ENCODE measurements at regions of chr16 and their contacts with region 1.

Region 1: DNA sequence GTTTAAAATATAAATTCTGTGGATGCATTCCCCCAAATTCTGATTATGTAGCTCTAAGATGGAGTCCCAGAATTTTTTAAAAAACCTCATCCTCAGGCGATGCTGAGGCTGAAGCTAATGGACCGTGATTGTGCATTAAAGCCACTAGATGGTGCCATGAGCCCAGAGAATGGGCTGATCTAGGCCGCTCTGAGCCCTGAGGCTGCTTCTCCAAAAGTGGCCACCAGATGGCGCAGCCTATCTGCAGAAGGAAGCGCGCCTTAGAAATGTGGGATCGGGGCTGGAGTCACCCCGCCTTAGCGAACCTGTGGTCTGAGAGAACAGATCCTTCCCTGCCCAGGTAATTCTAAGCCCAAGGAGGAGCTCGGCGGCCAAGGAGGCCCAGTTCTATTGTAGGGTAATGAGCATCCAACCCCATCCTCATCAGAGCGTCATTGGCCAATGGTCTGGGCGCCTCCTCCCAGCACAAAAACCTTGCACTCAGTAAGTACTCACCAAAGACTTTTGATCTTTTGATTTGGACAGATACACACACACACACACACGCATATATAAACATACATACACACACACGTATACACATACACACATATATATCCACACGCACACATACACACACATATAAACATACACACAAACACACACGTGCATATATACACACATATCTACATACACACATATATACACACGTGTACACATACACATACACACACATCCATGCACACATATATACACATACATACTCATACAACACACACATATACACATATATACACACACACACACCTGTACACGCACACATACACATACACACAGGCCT is 13.7 kb upstream of the MMP2 start:
- DNase-seq: peak; percentile 89
- H3K4me3 Mint-ChIP-seq: no peak overlapping the region
- H3K27ac Mint-ChIP-seq: no peak overlapping the region
- H3K4me1 Mint-ChIP-seq: no peaks in the 10 kb centered on the region
- H3K27me3 Mint-ChIP-seq: peaks cover 3% of the 10 kb centered on the region

Region 2: DNA sequence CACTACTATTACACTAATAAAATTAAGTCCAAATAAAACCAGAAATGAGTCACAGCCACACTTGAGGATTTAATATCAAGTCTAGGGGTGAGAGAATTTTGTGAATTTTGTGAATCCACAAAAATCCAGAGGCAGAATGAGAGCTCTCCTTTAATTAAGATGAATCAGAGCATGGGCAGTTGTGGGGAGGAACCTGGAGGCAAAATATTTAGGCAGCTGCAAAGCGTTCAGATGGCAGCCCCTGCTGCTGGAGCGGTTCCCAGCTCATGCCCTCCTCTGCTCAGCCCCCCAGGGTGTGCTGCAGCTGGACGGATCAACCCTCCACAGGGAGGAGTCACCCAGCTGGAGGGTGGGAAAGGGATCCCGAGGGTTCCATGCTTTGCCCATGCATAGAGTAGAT is 184.7 kb before region 1 on chr16:
- CTCF ChIA-PET with region 1: no interaction called
- DNase-seq: no peak
- H3K4me3 Mint-ChIP-seq: no peak overlapping the region
- H3K27ac Mint-ChIP-seq: no peak overlapping the region
- H3K4me1 Mint-ChIP-seq: no peaks in the 10 kb centered on the region
- H3K27me3 Mint-ChIP-seq: no peaks in the 10 kb centered on the region

Region 3: GRCh38 chr16:55499951-55500529 is 34.8 kb after region 1 on chr16:
- CTCF ChIA-PET with region 1: interaction called, 16 read pairs
- DNase-seq: peak; percentile 40
- H3K4me3 Mint-ChIP-seq: no peak overlapping the region
- H3K27ac Mint-ChIP-seq: no peak overlapping the region
- H3K4me1 Mint-ChIP-seq: peaks cover 15% of the 10 kb centered on the region
- H3K27me3 Mint-ChIP-seq: peaks cover 16% of the 10 kb centered on the region

Region 4: DNA sequence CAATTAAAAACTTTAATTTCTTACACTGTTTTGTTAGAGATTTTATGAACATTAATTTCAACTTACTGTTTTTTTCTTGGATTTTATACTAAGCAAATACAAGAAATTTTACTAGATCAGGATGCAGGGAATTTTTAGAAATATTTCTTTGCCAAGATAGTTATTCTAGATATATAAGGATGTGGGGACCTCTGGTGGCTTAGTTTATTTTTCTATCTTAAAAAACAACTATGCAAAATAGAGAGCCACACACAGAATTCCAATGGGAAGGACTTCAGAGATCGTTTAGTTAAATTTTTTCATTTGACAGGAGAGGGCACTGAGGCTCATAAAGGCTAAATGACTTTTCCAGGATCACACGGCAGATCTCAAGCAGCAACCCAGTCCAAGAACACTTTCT is 78.2 kb after region 1 on chr16:
- CTCF ChIA-PET with region 1: interaction called, 20 read pairs
- DNase-seq: no peak
- H3K4me3 Mint-ChIP-seq: no peak overlapping the region
- H3K27ac Mint-ChIP-seq: no peak overlapping the region
- H3K4me1 Mint-ChIP-seq: no peaks in the 10 kb centered on the region
- H3K27me3 Mint-ChIP-seq: no peaks in the 10 kb centered on the region

Region 5: GRCh38 chr16:55701442-55702319 is 236.4 kb after region 1 on chr16:
- CTCF ChIA-PET with region 1: interaction called, 125 read pairs
- DNase-seq: peak; percentile 48
- H3K4me3 Mint-ChIP-seq: no peak overlapping the region
- H3K27ac Mint-ChIP-seq: no peak overlapping the region
- H3K4me1 Mint-ChIP-seq: peaks cover 6% of the 10 kb centered on the region
- H3K27me3 Mint-ChIP-seq: peaks cover 7% of the 10 kb centered on the region

Region 6: DNA sequence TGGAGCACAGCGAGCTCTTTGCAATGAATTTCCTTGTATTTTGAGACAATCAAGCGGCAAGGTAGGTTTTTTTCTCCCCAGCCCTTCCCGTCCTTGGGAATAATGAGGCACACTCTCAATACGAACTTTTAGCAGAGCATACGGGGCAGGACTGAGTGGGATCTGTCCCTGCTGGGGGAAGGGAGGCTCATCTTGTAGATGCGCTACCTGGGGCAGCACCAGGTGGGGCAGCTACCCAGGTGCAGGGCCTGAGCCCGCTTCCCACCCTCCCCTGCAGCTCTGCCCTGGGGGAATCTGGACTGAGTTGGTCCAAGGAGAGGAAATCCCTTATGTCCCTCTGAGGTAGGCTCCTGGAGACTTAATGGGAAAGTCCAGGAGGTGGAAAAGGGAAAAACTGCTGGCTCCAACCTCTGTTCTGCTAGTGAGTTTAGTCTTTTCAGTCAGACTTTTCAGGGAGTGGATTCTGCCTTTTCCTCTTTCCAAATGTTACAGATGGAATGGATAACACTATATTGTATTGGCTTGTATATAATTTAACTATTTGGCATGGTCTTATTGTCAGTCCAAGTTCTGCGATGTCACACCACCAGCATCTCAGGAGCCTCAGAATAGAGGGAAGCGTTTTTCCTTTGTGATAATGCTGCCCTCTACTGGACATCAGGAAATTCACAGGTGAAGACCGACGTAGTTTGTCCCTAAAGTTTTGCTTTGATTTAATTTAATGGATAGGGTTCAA is 377.2 kb after region 1 on chr16:
- CTCF ChIA-PET with region 1: interaction called, 12 read pairs
- DNase-seq: no peak
- H3K4me3 Mint-ChIP-seq: no peak overlapping the region
- H3K27ac Mint-ChIP-seq: no peak overlapping the region
- H3K4me1 Mint-ChIP-seq: peaks cover 3% of the 10 kb centered on the region
- H3K27me3 Mint-ChIP-seq: peaks cover 16% of the 10 kb centered on the region